ENCODE measurements at regions of chr3 and their contacts with region 1.

Region 1: GRCh38 chr3:182792901-182793662 is at the start of gene ATP11B:
- DNase-seq: peak; percentile 62
- H3K4me3 Mint-ChIP-seq: peak within 1 kb of the TSS; percentile 92
- H3K27ac Mint-ChIP-seq: peak within 1 kb of the TSS; percentile 93
- H3K4me1 Mint-ChIP-seq: peaks cover 22% of the 10 kb centered on the region
- H3K27me3 Mint-ChIP-seq: no peaks in the 10 kb centered on the region
- CTCF ChIP-seq: no peak
- total RNA-seq, gene ATP11B: 66.2 and 69.9 TPM in 2 replicates

Region 2: DNA sequence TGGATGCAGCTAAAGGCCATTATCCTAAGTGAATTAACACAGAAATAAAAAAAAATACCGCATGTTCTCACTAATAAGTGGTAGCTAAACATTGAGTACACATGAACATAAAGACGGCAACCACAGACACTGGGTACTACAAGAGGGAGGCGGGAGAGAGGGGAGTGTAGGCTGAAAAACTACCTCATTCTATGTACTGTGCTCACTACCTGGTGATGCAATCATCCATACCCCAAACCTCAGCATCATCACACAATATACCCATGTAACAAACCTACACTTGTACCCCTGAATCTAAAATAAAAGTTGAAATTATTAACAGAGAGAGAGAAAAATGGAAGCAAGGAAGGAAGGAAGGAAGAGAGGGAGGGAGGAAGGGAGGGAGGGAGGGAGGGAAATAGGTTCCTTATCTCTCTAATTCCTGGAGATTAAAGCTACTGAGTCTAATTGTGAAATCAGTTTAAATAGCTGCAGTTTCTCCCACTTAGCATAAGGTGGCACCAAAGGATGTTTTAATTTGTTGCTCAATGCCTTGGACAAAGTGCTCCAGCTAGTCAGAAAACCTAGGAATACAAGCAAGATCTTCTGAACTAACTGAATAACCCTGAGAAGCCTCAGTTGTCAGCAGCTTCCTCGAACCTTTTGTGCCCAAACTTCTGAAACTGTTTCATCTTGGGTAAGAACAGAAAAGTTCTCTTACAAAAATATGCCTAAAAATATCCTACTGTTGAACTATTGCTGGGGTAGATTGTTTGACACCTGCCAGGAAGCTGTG is 79.2 kb before region 1 on chr3:
- CTCF ChIA-PET with region 1: no interaction called
- POLR2A ChIA-PET with region 1: interaction called, 20 read pairs
- intact Hi-C with region 1: loop called (anchors 10 kb)
- DNase-seq: peak; percentile 77
- H3K4me3 Mint-ChIP-seq: no peak overlapping the region
- H3K27ac Mint-ChIP-seq: no peak overlapping the region
- H3K4me1 Mint-ChIP-seq: no peaks in the 10 kb centered on the region
- H3K27me3 Mint-ChIP-seq: no peaks in the 10 kb centered on the region
- CTCF ChIP-seq: peak; percentile 68

Region 3: GRCh38 chr3:182782149-182782548 is 10.9 kb before region 1 on chr3:
- CTCF ChIA-PET with region 1: interaction called, 5 read pairs
- POLR2A ChIA-PET with region 1: interaction called, 32 read pairs
- intact Hi-C with region 1: no loop called
- DNase-seq: no peak
- H3K4me3 Mint-ChIP-seq: no peak overlapping the region
- H3K27ac Mint-ChIP-seq: no peak overlapping the region
- H3K4me1 Mint-ChIP-seq: no peaks in the 10 kb centered on the region
- H3K27me3 Mint-ChIP-seq: no peaks in the 10 kb centered on the region
- CTCF ChIP-seq: no peak

Region 4: GRCh38 chr3:182818296-182818978 is 25.4 kb after region 1 on chr3:
- CTCF ChIA-PET with region 1: interaction called, 3 read pairs
- POLR2A ChIA-PET with region 1: interaction called, 33 read pairs
- intact Hi-C with region 1: no loop called
- DNase-seq: no peak
- H3K4me3 Mint-ChIP-seq: no peak overlapping the region
- H3K27ac Mint-ChIP-seq: no peak overlapping the region
- H3K4me1 Mint-ChIP-seq: peaks cover 6% of the 10 kb centered on the region
- H3K27me3 Mint-ChIP-seq: no peaks in the 10 kb centered on the region
- CTCF ChIP-seq: no peak

Region 5: DNA sequence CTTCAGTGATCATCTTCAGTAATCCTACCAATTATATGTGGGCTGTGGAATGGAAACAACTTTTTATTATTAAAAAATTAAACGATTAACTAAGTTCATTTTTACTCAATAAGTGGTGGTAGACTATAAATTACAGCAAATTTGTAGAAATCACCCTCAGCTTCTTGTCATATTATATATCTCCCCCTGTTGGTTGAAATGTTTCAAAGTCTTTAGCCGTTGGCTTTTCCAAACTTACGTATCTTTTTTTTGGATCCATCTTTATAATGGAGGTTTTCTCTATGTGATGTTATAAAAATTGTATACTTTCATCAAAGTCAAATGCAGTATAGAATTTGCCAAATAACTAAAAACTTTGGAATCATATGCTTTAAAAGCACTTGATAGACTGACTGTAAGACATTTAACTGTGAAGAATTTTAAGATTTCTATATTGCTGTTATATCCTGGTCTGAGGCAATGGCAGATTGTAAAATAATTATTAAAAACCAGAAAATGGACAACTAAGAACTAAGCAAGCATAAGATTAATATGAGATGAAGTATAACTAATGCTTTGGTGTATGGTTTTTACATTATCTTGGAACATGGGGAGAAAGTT is 44.9 kb after region 1 on chr3:
- CTCF ChIA-PET with region 1: interaction called, 3 read pairs
- POLR2A ChIA-PET with region 1: interaction called, 13 read pairs
- intact Hi-C with region 1: loop called (anchors 5 kb)
- DNase-seq: peak; percentile 27
- H3K4me3 Mint-ChIP-seq: no peak overlapping the region
- H3K27ac Mint-ChIP-seq: no peak overlapping the region
- H3K4me1 Mint-ChIP-seq: no peaks in the 10 kb centered on the region
- H3K27me3 Mint-ChIP-seq: no peaks in the 10 kb centered on the region
- CTCF ChIP-seq: peak; percentile 54

Measured in MCF 10A (cell line).